Transverse colon (tissue), 4 donors: ENCODE measurements at regions of chr4 and their contacts with region 1.

Region 1: GRCh38 chr4:184168406-184169019 is 49.2 kb downstream of the ENPP6 start:
- DNase-seq: peak; percentile 69
- H3K4me3 ChIP-seq: no peak overlapping the region
- H3K27ac ChIP-seq: no peak overlapping the region
- H3K4me1 ChIP-seq: peaks cover 0 to 8% (median 5%) of the 10 kb centered on the region in 4 donors
- H3K27me3 ChIP-seq: peaks cover 39% of the 10 kb centered on the region
- CTCF ChIP-seq: peak; percentile 84 to 96 (median 94)
- EP300 ChIP-seq: no peak
- POLR2A ChIP-seq: no peak

Region 2: DNA sequence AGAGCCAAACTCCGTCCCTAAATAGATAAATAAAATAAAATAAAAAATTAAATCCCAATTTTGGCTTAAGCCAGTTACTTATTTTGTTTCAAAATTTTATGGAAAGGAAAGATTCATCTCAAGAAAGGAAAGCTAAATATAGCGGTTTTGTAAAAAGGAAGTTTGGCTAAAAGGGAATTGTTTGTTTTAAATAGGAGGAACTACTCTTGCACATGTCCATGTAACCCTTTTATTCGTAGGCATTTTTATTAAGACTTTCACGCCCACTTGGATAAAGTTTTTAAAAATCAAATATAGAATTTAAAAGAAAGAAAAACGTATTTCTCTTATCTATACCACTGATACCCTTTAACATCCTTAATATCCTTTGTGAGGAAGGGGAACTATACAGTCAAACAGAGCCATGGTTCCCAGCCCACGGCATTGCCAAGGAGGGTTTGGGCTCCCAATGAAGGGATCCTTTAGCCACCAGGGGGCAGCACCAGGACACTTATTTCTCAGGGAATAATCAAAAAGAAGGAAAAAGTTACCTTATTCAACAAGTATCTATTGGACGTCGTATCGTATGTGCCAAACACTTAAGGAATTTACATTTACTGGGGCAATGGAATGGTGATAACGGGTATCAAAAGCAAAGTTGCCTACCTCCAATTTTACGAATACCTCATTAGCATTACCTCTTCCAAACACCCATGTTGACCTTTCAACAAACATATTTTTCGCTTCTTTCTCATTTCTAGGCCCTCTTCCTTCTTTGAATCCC is 696.4 kb before region 1 on chr4:
- in situ Hi-C with region 1: loop called in 1 of 4 experiments (anchors 25 kb)
- intact Hi-C with region 1: no loop called
- DNase-seq: peak; percentile 88
- H3K4me3 ChIP-seq: no peak overlapping the region
- H3K27ac ChIP-seq: no peak overlapping the region
- H3K4me1 ChIP-seq: peaks cover 0 to 6% (median 2%) of the 10 kb centered on the region in 4 donors
- H3K27me3 ChIP-seq: peaks cover 3% of the 10 kb centered on the region
- CTCF ChIP-seq: peak; percentile 83 to 91 (median 87)
- EP300 ChIP-seq: no peak
- POLR2A ChIP-seq: no peak

Region 3: DNA sequence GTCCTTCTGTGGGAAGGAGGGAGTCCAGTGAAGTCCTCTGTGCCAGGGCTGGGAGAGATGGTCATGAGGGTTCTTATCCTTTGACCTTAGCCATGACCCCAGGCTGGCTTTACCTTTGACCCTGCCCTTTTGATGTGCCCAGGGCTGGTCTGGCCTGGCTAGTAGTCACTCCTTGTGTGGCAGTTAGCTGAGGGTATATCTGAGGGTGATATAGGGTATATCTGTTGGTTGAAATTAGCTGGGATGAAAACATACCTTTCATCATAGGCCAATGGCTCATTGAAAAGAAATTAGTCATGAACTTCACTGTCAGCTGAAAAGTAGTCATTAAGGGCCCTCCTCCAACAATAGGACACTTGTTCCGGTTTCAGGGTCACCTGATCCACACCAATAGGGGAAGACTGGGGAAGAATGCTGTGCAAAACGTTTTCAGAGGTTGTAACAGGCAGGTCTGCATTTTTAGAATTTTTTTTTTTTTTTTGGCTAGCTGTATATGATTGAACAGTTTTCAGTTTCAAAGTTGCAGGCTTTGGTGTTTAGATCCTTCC is 338.0 kb before region 1 on chr4:
- in situ Hi-C with region 1: loop called in 3 of 4 experiments (anchors 5 to 10 kb)
- intact Hi-C with region 1: no loop called
- DNase-seq: no peak
- H3K4me3 ChIP-seq: no peak overlapping the region
- H3K27ac ChIP-seq: peak overlapping the region in 2 of 4 donors; percentile 32 to 43
- H3K4me1 ChIP-seq: peaks cover 0 to 23% (median 9%) of the 10 kb centered on the region in 4 donors
- H3K27me3 ChIP-seq: no peaks in the 10 kb centered on the region
- CTCF ChIP-seq: no peak
- EP300 ChIP-seq: no peak
- POLR2A ChIP-seq: no peak

Region 4: GRCh38 chr4:183840311-183840710 is 328.2 kb before region 1 on chr4:
- in situ Hi-C with region 1: loop called in 3 of 4 experiments (anchors 5 to 10 kb)
- intact Hi-C with region 1: loop called (anchors 2 kb)
- DNase-seq: peak; percentile 81
- H3K4me3 ChIP-seq: no peak overlapping the region
- H3K27ac ChIP-seq: no peak overlapping the region
- H3K4me1 ChIP-seq: no peaks in the 10 kb centered on the region
- H3K27me3 ChIP-seq: no peaks in the 10 kb centered on the region
- CTCF ChIP-seq: peak; percentile 78 to 86 (median 85)
- EP300 ChIP-seq: no peak
- POLR2A ChIP-seq: no peak